A549 (cell line): ENCODE measurements at regions of chr18 and their contacts with region 1.

Region 1: DNA sequence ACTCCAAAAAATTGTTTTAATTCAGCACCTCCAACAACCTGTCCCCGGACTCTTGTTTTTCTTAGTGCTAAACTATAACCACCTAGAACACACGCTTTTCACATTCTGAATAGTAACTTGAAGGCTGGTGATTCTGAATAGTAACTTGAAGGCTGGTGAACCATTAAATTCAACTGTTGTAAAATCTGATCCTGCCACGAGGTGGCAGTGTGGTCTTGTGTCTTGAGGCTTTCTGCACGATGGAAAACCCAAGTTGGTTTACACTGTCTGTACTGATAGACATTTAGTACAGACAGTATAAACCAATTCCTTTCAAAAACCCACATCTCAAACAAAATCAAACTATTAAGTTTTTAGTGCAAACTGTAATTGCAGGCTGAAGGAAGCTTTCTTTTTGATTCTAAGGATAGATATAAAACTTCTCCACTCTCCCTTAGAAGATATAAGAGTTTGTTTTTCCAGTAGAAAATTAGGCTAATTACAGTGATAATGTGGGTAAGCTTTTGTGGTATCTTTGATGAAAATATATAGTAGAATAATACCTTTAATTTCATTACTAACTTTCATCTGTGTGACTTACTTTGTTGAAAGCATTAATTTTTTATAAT is 57.6 kb downstream of the VAPA start:
- DNase-seq: peak; percentile 29 to 72
- ATAC-seq: peak; percentile 58 to 73; a peak in 3 of 6 replicates
- H3K4me3 ChIP-seq: no peak overlapping the region
- H3K27ac ChIP-seq: no peak overlapping the region
- H3K4me1 ChIP-seq: no peaks in the 10 kb centered on the region
- CTCF ChIP-seq: peak; percentile 81
- EP300 ChIP-seq: no peak
- POLR2A ChIP-seq: no peak
- RAD21 ChIP-seq: peak; percentile 88 to 91

Region 2: GRCh38 chr18:9984080-9984479 is 12.7 kb after region 1 on chr18:
- CTCF ChIA-PET with region 1: interaction called, 19 read pairs
- POLR2A ChIA-PET with region 1: no interaction called
- DNase-seq: no peak
- ATAC-seq: no peak
- H3K4me3 ChIP-seq: no peak overlapping the region
- H3K27ac ChIP-seq: no peak overlapping the region
- H3K4me1 ChIP-seq: no peaks in the 10 kb centered on the region
- CTCF ChIP-seq: no peak
- EP300 ChIP-seq: no peak
- POLR2A ChIP-seq: no peak
- RAD21 ChIP-seq: no peak

Region 3: GRCh38 chr18:10164271-10165071 is 193.1 kb after region 1 on chr18:
- CTCF ChIA-PET with region 1: no interaction called
- POLR2A ChIA-PET with region 1: no interaction called
- DNase-seq: no peak
- ATAC-seq: no peak
- H3K4me3 ChIP-seq: no peak overlapping the region
- H3K27ac ChIP-seq: no peak overlapping the region
- H3K4me1 ChIP-seq: peaks cover 5% of the 10 kb centered on the region; the same call in 2 of the 3 replicates
- CTCF ChIP-seq: no peak
- EP300 ChIP-seq: no peak
- POLR2A ChIP-seq: no peak
- RAD21 ChIP-seq: no peak

Region 4: DNA sequence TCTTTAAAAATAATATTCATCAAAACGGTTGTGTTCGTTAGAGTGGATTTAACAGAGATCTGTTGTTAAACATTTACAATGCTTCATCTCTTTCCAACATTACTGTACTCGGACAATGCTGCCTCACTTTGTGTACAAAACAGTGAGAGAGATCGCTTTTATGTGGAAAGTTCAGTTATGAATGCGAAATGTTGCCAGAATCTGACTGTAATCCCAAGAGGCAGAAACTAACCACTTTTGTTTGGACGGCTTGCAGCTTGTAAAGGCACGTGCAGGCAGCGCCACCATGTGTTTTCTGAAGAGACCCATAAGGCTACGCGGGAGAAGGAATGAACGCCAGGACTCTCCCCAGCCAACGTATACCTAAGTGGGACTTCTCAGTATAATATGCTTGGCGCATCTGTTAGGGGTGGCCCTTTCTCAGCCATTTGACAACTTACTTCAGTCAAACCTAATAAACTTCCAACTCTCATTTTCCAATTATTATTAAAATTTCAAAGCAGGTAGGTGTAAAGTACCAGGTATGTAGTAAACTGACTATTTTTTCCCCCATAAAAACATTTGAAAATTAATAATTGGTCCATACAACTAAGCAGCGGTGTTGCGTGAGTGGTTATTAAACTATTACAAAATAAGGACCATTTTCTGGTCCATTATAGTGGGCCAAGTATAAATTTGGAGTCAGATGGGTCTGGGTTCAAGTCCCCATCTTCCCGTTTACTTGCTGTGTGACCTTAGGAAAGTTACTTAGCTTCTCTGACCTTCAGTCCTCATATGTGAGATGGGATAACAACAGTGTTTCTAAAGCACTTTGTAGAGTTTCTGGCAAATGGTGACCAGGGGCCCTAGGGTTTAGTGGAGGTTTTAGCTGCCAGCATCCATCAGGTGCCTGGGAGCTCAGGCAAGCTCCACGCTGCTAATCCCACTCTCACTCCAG is 548.9 kb after region 1 on chr18:
- CTCF ChIA-PET with region 1: interaction called, 116 read pairs
- POLR2A ChIA-PET with region 1: no interaction called
- DNase-seq: peak; percentile 51 to 78
- ATAC-seq: peak; percentile 92 to 96; a peak in 5 of 6 replicates
- H3K4me3 ChIP-seq: no peak overlapping the region
- H3K27ac ChIP-seq: no peak overlapping the region
- H3K4me1 ChIP-seq: no peaks in the 10 kb centered on the region
- CTCF ChIP-seq: peak; percentile 65
- EP300 ChIP-seq: no peak
- POLR2A ChIP-seq: no peak
- RAD21 ChIP-seq: peak; percentile 83 to 84